ENCODE measurements at regions of chr12 and their contacts with region 1.

Region 1: GRCh38 chr12:5745265-5745888 is 199.7 kb downstream of the ANO2 start:
- DNase-seq: no peak
- H3K4me3 ChIP-seq: no peak overlapping the region
- CTCF ChIP-seq: peak; percentile 88

Region 2: DNA sequence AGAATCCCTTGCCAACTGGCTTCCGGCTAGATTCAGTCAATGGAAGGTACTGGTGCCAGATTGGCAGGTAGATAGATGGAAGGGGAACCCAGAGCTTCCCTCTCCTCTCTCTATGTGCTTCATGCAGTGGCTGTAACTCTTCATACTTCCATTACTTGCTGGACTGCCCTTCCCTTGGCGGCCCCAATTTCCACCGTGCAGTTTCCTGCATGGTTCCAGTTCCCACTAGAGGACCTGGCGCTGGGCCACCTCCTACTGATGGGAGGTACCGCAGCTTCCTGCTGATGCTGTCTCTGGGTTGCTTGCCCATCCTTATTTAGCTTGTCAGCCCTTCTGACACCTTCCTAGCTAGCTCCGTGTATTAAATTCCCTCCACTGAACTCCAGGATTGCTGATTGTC is 26.7 kb before region 1 on chr12:
- CTCF ChIA-PET with region 1: interaction called, 19 read pairs
- POLR2A ChIA-PET with region 1: no interaction called
- DNase-seq: no peak
- H3K4me3 ChIP-seq: no peak overlapping the region
- CTCF ChIP-seq: no peak

Region 3: DNA sequence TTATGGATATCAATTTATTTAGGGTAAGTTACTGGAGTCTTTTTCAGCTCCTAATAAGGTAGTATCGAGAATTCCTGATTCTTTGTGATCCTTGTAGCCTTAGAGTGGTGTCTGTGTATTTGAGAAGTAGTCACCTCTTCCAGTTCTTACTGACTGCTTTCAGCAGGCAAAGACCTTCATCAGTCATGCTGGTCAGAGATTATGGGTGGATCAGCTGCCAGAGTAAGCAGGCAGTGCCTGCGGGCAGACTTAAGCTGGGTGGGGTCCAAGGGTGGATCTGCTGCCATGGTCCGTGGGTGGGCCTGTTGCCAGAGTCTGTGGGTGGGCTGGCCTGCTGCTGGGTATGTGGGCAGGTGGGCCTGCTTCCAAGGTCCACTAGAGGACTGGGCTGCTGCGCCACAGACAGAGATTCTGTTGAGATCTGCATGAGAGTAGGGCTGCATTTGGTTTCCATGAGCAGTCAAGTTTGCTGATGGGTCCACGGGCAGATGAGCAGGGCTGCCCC is 11.0 kb after region 1 on chr12:
- CTCF ChIA-PET with region 1: interaction called, 18 read pairs
- POLR2A ChIA-PET with region 1: no interaction called
- DNase-seq: no peak
- H3K4me3 ChIP-seq: no peak overlapping the region
- CTCF ChIP-seq: no peak

Region 4: GRCh38 chr12:5796171-5796958 is 51.0 kb after region 1 on chr12:
- CTCF ChIA-PET with region 1: interaction called, 32 read pairs
- POLR2A ChIA-PET with region 1: no interaction called
- DNase-seq: no peak
- H3K4me3 ChIP-seq: no peak overlapping the region
- CTCF ChIP-seq: peak; percentile 90

Region 5: DNA sequence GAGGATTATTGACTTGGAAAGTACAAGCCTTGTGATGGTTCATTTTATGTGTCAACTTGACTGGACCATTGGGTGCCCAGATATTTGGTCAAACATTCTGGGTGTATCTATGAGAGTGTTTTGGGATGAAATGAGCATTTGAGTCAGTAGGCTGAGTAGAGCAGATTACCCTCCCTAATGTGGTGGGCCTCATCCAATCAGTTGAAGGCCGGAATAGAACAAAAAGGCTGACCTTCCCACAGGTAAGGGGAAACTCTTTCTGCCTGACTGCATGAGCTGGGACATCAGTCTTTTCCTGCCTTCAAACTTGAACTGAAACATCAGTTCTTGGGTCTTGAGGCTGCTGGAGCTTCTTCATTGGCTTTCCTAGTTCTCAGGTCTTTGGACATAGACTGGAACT is 101.6 kb after region 1 on chr12:
- CTCF ChIA-PET with region 1: no interaction called
- POLR2A ChIA-PET with region 1: no interaction called
- DNase-seq: no peak
- H3K4me3 ChIP-seq: no peak overlapping the region
- CTCF ChIP-seq: no peak

Region 6: DNA sequence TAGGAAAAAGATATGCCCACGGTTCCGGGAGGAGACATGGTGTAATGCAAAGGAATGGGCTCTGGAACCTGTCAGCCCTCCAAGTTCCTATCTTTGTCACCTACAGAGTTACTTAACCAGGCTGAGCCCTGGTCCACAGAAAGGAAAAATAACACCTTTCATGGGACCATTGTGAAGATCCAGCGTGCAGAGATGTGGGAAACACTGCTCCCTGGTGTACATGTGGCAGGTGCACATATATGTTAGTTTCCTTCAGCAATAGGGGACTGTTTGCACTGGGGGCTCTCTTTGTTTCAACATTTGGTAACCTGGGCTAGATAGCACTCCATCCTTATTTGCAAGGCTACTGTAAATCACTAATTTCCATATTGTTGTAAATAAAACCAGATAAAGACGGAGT is 127.4 kb after region 1 on chr12:
- CTCF ChIA-PET with region 1: interaction called, 43 read pairs
- POLR2A ChIA-PET with region 1: no interaction called
- DNase-seq: no peak
- H3K4me3 ChIP-seq: no peak overlapping the region
- CTCF ChIP-seq: peak; percentile 44

Region 7: DNA sequence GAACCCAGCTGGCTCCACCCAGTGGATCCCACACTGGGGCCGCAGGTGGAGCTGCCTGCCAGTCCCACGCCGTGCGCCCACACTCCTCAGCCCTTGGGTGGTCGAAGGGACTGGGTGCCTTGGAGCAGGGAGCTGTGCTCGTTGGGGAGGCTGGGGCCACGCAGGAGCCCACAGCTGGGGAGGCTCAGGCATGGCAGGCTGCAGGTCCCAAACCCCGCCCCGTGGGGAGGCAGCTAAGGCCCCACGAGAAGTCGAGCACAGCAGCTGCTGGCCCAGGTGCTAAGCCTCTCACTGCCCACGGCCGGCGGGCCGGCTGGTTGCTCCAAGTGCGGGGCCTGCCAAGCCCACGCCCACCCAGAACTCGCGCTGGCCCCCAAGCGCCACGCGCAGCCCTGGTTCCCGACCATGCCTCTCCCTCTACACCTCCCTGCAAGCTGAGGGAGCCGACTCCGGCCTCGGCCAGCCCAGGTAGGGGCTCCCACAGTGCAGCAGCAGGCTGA is 143.5 kb after region 1 on chr12:
- CTCF ChIA-PET with region 1: no interaction called
- POLR2A ChIA-PET with region 1: no interaction called
- DNase-seq: no peak
- H3K4me3 ChIP-seq: no peak overlapping the region
- CTCF ChIP-seq: no peak

Measured in AG04449 (cell line).